Naive thymus-derived CD4-positive, alpha-beta T cell (primary cell): ENCODE measurements at regions of chr12 and their contacts with region 1.

Region 1: GRCh38 chr12:64256166-64256800 is 34.2 kb upstream of the KICS2 start:
- DNase-seq: peak in 7 of 9 donors; percentile 18 to 60 (median 47)
- ATAC-seq: peak; percentile 66
- H3K4me3 ChIP-seq: no peak overlapping the region
- H3K4me3 Mint-ChIP-seq: no peak overlapping the region
- H3K27ac ChIP-seq: no peak overlapping the region
- H3K27ac Mint-ChIP-seq: no peak overlapping the region
- H3K4me1 ChIP-seq: no peaks in the 10 kb centered on the region
- H3K4me1 Mint-ChIP-seq: peaks cover 0 to 7% (median 0%) of the 10 kb centered on the region in 7 donors
- H3K27me3 ChIP-seq: no peaks in the 10 kb centered on the region
- H3K27me3 Mint-ChIP-seq: no peaks in the 10 kb centered on the region

Region 2: GRCh38 chr12:63103494-63104131 is 1152.7 kb before region 1 on chr12:
- CTCF ChIA-PET with region 1: no interaction called
- POLR2A ChIA-PET with region 1: no interaction called
- intact Hi-C with region 1: loop called in 1 of 2 experiments (anchors 1 kb)
- DNase-seq: peak in 4 of 9 donors; percentile 5 to 14 (median 6)
- ATAC-seq: no peak
- H3K4me3 ChIP-seq: no peak overlapping the region
- H3K4me3 Mint-ChIP-seq: no peak overlapping the region
- H3K27ac ChIP-seq: no peak overlapping the region
- H3K27ac Mint-ChIP-seq: no peak overlapping the region
- H3K4me1 ChIP-seq: no peaks in the 10 kb centered on the region
- H3K4me1 Mint-ChIP-seq: no peaks in the 10 kb centered on the region
- H3K27me3 ChIP-seq: no peaks in the 10 kb centered on the region
- H3K27me3 Mint-ChIP-seq: peaks cover 0 to 13% (median 5%) of the 10 kb centered on the region in 5 donors

Region 3: GRCh38 chr12:63668028-63668799 is 588.1 kb before region 1 on chr12 and contains the start of gene DPY19L2:
- CTCF ChIA-PET with region 1: no interaction called
- POLR2A ChIA-PET with region 1: no interaction called
- intact Hi-C with region 1: loop called in 1 of 2 experiments (anchors 2 kb)
- DNase-seq: peak in 8 of 9 donors; percentile 5 to 50 (median 27)
- ATAC-seq: peak; percentile 41
- H3K4me3 ChIP-seq: peak within 1 kb of the TSS; percentile 46
- H3K4me3 Mint-ChIP-seq: peak within 1 kb of the TSS; percentile 78 to 89 (median 84)
- H3K27ac ChIP-seq: peak within 1 kb of the TSS; percentile 35
- H3K27ac Mint-ChIP-seq: peak within 1 kb of the TSS in 4 of 9 donors; percentile 34 to 74 (median 54)
- H3K4me1 ChIP-seq: no peaks in the 10 kb centered on the region
- H3K4me1 Mint-ChIP-seq: peaks cover 8 to 26% (median 24%) of the 10 kb centered on the region in 7 donors
- H3K27me3 ChIP-seq: no peaks in the 10 kb centered on the region
- H3K27me3 Mint-ChIP-seq: peaks cover 19 to 53% (median 28%) of the 10 kb centered on the region in 5 donors
- total RNA-seq, gene DPY19L2: 0.34 to 3.1 (median 1.4) TPM

Region 4: DNA sequence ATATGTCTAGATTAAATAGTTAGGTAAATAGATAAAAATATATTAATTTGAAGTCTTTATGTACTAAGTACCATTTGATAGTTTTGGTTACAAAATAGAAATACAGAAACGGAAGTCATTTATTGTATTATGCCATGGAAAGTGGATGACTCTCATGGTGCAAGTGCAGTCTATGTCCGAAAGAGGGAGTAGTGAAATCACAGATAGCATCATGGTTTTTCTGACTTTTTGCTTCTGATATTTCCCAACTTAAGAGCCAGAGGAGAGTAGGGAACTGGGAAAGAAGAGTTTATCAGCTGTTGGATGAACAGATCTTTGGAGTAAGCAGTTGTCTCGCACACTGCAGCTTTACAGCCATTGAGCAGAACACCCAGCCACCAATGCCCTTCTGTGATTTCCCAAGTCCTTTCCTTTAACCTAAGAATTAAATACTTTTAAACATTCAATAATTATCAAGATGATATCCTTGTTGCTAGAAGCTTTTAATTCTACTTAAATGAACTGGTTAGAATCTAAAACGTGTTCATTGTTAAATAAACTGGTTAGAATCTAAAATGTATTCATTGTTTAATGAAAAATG is 430.2 kb before region 1 on chr12:
- CTCF ChIA-PET with region 1: interaction called, 3 read pairs
- POLR2A ChIA-PET with region 1: no interaction called
- intact Hi-C with region 1: loop called (anchors 1 kb)
- DNase-seq: no peak
- ATAC-seq: peak; percentile 53
- H3K4me3 ChIP-seq: no peak overlapping the region
- H3K4me3 Mint-ChIP-seq: no peak overlapping the region
- H3K27ac ChIP-seq: no peak overlapping the region
- H3K27ac Mint-ChIP-seq: no peak overlapping the region
- H3K4me1 ChIP-seq: no peaks in the 10 kb centered on the region
- H3K4me1 Mint-ChIP-seq: peaks cover 0 to 8% (median 5%) of the 10 kb centered on the region in 7 donors
- H3K27me3 ChIP-seq: no peaks in the 10 kb centered on the region
- H3K27me3 Mint-ChIP-seq: peaks cover 20 to 38% (median 27%) of the 10 kb centered on the region in 5 donors

Region 5: DNA sequence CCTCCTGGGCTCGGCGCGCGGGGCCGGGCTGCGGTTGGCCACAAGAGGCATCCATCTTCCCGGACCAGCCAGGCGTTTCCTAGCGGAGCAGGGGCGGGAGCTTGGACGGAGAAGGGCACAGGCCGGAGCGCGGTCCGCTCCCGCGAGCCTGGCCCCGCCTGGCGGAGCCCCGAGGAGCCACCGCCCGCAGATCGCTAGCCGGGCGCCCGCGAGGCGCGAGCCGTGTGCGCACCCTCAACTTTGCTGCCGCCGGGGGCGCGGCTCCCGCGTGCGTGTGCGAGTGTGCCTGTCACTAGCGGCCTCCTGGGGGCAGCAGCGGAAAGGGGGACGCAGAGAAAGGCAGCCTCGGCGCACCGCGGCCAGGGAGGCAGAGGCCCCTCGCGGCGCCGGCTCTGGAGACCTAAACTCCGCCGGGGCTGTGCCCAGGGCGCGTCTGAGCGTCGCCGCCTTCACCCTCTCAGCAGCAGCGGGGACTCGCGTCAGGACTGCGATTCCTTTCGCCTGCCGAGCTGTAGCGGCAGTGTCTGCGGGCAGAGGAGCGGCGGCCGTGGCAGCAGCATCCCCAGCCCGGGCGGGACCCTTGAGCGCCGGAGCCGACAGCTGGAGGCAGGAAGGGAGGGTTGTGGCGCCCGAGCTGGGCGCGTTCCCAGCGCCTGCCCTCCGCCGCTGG is 412.4 kb before region 1 on chr12:
- CTCF ChIA-PET with region 1: interaction called, 13 read pairs
- POLR2A ChIA-PET with region 1: no interaction called
- intact Hi-C with region 1: loop called (anchors 1 kb)
- DNase-seq: peak; percentile 50 to 76 (median 70)
- ATAC-seq: peak; percentile 97
- H3K4me3 ChIP-seq: peak overlapping the region; percentile 57
- H3K4me3 Mint-ChIP-seq: peak overlapping the region; percentile 32 to 93 (median 67)
- H3K27ac ChIP-seq: no peak overlapping the region
- H3K27ac Mint-ChIP-seq: no peak overlapping the region
- H3K4me1 ChIP-seq: no peaks in the 10 kb centered on the region
- H3K4me1 Mint-ChIP-seq: peaks cover 0 to 12% (median 10%) of the 10 kb centered on the region in 7 donors
- H3K27me3 ChIP-seq: peaks cover 3 to 11% of the 10 kb centered on the region in 2 donors
- H3K27me3 Mint-ChIP-seq: peaks cover 17 to 47% (median 35%) of the 10 kb centered on the region in 5 donors

Region 6: GRCh38 chr12:65084579-65084978 is 828.3 kb after region 1 on chr12:
- CTCF ChIA-PET with region 1: no interaction called
- POLR2A ChIA-PET with region 1: no interaction called
- intact Hi-C with region 1: no loop called
- DNase-seq: no peak
- ATAC-seq: no peak
- H3K4me3 ChIP-seq: no peak overlapping the region
- H3K4me3 Mint-ChIP-seq: no peak overlapping the region
- H3K27ac ChIP-seq: no peak overlapping the region
- H3K27ac Mint-ChIP-seq: no peak overlapping the region
- H3K4me1 ChIP-seq: no peaks in the 10 kb centered on the region
- H3K4me1 Mint-ChIP-seq: no peaks in the 10 kb centered on the region
- H3K27me3 ChIP-seq: no peaks in the 10 kb centered on the region
- H3K27me3 Mint-ChIP-seq: peaks cover 17 to 39% (median 23%) of the 10 kb centered on the region in 5 donors